Caco-2 (cell line): ENCODE measurements at regions of chr16 and their contacts with region 1.

Region 1: DNA sequence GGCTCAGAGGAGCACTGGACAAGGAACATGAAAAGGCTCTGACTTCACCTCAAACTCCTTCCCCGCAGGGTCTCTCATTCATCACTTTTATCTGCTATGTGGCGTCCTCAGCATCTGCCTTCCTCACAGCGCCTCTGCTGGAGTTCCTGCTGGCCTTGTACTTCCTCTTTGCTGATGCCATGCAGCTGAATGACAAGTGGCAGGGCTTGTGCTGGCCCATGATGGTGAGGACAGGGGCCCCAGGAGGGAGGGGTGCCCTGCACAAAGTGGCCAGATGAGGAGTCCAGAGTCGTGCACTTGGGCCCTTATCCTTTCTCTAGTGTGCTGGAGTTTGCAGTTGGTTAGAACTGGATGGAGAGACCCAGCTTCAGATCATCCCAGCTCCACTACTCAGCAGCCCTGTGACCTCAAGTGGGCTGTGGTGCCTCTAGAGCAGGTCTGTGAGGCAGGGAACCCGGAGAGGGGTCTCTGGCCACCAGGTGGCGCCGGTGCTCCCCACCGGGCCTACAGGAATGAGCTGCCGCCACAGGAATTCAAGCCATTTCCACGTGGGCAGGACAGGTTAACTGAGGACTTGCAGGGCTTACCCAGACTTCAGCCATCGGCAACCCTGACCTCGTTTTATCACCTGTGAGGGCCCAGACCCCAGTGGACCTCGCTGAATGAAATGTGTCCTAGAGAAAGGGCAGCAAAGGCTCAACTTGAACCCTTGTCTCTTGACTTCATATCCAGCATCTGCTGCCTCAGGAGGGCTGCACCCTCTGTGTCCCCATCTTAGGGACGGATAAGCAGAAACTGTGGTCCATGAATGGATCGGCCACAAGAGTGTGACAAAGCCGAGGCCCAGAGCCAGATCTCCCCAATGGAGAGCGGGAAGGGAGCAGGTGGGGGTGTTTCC is 4.0 kb downstream of the CMTM3 start:
- DNase-seq: peak; percentile 95 to 96
- H3K4me3 ChIP-seq: no peak overlapping the region
- H3K4me3 Mint-ChIP-seq: no peak overlapping the region
- H3K27ac Mint-ChIP-seq: peak overlapping the region; percentile 54
- H3K4me1 ChIP-seq: peaks cover 29% of the 10 kb centered on the region
- H3K4me1 Mint-ChIP-seq: peaks cover 26% of the 10 kb centered on the region
- H3K27me3 ChIP-seq: no peaks in the 10 kb centered on the region
- H3K27me3 Mint-ChIP-seq: no peaks in the 10 kb centered on the region
- CTCF ChIP-seq: peak; percentile 96 to 99

Region 2: DNA sequence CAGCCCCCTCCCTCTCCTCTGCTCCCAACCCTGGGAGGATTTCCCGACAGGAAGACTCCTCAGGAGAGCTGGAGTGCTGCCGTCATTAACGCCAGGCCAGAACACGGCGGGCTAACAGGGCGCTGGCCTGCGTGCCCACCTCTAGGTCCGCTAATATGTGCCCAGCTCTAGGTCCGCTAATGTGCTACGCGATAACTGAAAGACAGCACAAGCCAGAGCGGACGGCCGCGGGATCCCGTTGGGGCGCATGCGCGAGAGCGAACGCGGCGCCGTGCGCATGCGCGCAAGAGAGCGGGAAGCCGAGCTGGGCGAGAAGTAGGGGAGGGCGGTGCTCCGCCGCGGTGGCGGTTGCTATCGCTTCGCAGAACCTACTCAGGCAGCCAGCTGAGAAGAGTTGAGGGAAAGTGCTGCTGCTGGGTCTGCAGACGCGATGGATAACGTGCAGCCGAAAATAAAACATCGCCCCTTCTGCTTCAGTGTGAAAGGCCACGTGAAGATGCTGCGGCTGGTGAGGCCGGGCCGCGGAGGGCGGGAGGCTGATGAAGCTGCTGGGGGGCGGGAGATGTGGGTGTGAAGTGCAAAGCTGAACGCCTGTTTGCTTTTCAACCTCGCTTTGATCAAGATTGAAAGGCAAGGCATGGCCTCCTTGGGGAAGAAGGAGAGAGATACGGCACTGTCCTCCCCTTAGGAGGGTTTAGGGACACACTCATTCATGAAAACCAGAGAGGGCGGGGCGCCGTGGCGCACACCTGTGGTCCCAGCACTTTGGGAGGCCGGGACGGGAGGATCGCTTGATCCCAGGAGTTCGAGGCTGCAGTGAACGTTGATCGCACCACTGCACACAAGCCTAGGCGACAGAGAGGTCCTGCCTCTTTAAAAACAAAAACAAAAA is 56.0 kb before region 1 on chr16 and contains the start of gene CKLF:
- CTCF ChIA-PET with region 1: interaction called, 7 read pairs
- POLR2A ChIA-PET with region 1: no interaction called
- intact Hi-C with region 1: loop called (anchors 5 kb)
- DNase-seq: peak; percentile 90 to 96
- H3K4me3 ChIP-seq: peak within 1 kb of the TSS; percentile 73
- H3K4me3 Mint-ChIP-seq: peak within 1 kb of the TSS; percentile 87
- H3K27ac Mint-ChIP-seq: peak within 1 kb of the TSS; percentile 81
- H3K4me1 ChIP-seq: peaks cover 28% of the 10 kb centered on the region
- H3K4me1 Mint-ChIP-seq: peaks cover 47% of the 10 kb centered on the region
- H3K27me3 ChIP-seq: no peaks in the 10 kb centered on the region
- H3K27me3 Mint-ChIP-seq: no peaks in the 10 kb centered on the region
- CTCF ChIP-seq: no peak
- total RNA-seq, gene CKLF: 96.4 and 103 TPM in 2 replicates

Region 3: DNA sequence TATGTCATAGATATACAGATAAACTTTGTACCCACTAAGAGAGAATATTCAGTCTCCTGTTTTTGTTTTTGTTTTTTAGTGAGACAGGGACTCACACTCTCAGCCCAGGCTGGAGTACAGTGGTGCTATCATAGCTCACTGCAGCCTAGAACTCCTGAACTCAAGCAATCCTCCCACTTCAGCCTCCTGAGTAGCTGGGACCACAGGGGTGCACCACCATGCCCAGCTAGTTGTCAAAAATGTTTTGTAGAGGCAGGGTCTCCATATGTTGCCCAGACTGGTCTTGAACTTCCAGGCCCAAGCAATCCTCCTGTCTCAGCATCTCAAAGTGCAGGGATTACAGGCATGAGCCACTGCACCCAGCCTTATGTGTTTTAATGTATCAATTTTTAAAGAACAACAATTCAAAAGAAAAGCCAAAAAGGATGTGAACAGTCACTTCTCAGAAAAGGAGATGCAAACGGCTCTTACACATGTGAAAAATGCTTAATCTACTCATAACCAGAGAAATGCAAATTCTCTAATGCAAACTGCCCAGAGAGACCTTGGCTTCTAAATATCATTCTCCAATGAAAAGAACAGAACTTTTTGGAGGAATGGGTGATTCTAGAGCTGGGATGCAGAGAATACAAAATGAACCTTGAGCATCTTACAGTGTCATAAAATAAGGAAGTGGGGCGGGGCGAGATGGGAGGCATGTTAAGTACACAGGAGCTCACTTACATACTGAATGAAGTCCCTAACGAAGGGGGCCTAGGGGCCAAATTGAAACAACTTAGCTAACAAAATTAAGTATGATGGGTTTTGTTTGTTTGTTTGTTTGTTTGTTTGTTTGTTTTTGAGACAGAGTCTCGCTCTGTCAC is 11.3 kb before region 1 on chr16:
- CTCF ChIA-PET with region 1: interaction called, 10 read pairs
- POLR2A ChIA-PET with region 1: no interaction called
- intact Hi-C with region 1: no loop called
- DNase-seq: no peak
- H3K4me3 ChIP-seq: no peak overlapping the region
- H3K4me3 Mint-ChIP-seq: no peak overlapping the region
- H3K27ac Mint-ChIP-seq: no peak overlapping the region
- H3K4me1 ChIP-seq: no peaks in the 10 kb centered on the region
- H3K4me1 Mint-ChIP-seq: no peaks in the 10 kb centered on the region
- H3K27me3 ChIP-seq: no peaks in the 10 kb centered on the region
- H3K27me3 Mint-ChIP-seq: peaks cover 4% of the 10 kb centered on the region
- CTCF ChIP-seq: no peak

Region 4: DNA sequence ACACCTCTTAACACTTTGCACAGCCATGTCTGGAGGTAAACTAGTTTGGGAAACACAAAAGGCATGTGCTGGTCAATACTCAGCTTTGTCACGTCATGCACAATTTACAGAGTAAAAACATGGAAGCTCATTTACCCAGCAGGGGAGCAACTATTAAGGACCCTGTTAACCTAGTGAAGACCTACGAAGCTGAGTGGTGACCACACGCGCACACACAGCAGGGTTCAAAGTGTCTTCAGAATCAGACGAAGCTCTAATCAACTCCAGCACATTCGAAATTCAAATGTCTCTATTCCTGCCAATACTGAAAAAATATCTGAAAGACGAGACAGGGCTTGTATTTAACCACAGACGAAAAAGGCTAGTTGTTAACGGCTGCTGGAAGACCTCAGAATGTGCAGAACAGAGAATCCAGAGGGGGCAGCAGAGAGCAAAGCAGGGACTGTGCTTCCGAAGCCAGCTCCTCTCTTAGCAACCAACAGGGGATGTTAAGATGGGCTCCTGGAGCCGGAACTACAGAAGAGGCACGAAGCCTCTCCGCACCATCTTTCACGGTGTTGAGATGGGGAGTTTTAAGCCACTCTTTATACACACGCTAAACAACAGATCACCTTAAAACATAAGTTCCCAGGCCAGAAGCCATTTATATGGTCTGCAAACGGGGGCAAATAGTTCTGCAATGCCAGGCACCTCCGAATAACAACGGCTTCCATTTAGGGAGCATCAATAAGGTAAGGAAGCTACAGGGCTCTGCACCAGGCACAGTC is 42.4 kb after region 1 on chr16:
- CTCF ChIA-PET with region 1: interaction called, 24 read pairs
- POLR2A ChIA-PET with region 1: no interaction called
- intact Hi-C with region 1: loop called (anchors 2 kb)
- DNase-seq: peak; percentile 75 to 86
- H3K4me3 ChIP-seq: no peak overlapping the region
- H3K4me3 Mint-ChIP-seq: peak overlapping the region; percentile 42
- H3K27ac Mint-ChIP-seq: no peak overlapping the region
- H3K4me1 ChIP-seq: peaks cover 19% of the 10 kb centered on the region; the same call in 1 of the 2 replicates
- H3K4me1 Mint-ChIP-seq: peaks cover 24% of the 10 kb centered on the region
- H3K27me3 ChIP-seq: no peaks in the 10 kb centered on the region
- H3K27me3 Mint-ChIP-seq: no peaks in the 10 kb centered on the region
- CTCF ChIP-seq: peak; percentile 92 to 96

Region 5: GRCh38 chr16:66717112-66717675 is 108.7 kb after region 1 on chr16:
- CTCF ChIA-PET with region 1: no interaction called
- POLR2A ChIA-PET with region 1: no interaction called
- intact Hi-C with region 1: loop called (anchors 5 kb)
- DNase-seq: peak; percentile 48 to 58
- H3K4me3 ChIP-seq: no peak overlapping the region
- H3K4me3 Mint-ChIP-seq: no peak overlapping the region
- H3K27ac Mint-ChIP-seq: no peak overlapping the region
- H3K4me1 ChIP-seq: peaks cover 23% of the 10 kb centered on the region
- H3K4me1 Mint-ChIP-seq: peaks cover 10% of the 10 kb centered on the region
- H3K27me3 ChIP-seq: no peaks in the 10 kb centered on the region
- H3K27me3 Mint-ChIP-seq: no peaks in the 10 kb centered on the region
- CTCF ChIP-seq: peak; percentile 38 to 65

Region 6: DNA sequence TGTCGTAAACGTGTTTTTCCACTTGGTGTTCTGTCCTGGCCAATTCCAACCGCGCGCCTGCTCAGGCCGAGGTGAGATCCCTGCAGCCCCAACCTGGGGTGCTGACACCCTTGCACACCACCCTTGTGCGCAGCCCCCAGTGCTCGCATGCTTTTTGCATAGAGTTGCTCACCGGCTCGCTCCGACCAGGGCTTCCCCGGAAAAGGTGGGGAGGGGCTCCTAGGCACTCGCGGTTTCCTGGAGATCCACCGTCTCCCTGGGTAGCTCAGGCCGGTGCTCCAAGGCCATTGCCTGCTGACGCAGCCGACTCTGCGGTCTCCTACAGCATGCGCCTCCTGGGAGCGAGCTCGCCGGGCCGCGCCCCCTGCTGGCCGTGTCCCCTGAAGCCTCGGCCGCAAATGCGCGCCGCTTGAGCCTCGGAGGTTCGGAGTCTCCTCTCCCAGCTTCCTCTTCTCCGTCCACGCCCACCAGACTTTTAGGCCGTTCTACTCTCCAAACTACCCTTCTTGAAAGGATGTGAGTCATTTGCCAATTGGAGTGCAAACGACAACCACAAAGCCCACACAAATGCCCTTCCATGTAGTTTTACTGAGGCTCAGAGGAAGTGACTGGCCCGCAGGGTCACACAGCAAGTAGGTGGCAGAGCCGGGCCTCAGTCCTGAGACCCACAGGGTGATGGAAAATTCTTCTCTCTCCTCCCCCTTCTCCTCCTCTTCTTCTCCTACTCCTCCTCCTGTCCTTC is 264.6 kb after region 1 on chr16:
- CTCF ChIA-PET with region 1: interaction called, 21 read pairs
- POLR2A ChIA-PET with region 1: no interaction called
- intact Hi-C with region 1: loop called (anchors 1 kb)
- DNase-seq: peak; percentile 88 to 93
- H3K4me3 ChIP-seq: peak overlapping the region; percentile 46
- H3K4me3 Mint-ChIP-seq: peak overlapping the region; percentile 80
- H3K27ac Mint-ChIP-seq: peak overlapping the region; percentile 46
- H3K4me1 ChIP-seq: peaks cover 18% of the 10 kb centered on the region
- H3K4me1 Mint-ChIP-seq: peaks cover 20% of the 10 kb centered on the region
- H3K27me3 ChIP-seq: no peaks in the 10 kb centered on the region; the same call in 1 of the 2 replicates
- H3K27me3 Mint-ChIP-seq: no peaks in the 10 kb centered on the region
- CTCF ChIP-seq: peak; percentile 95 to 98